ENCODE measurements at regions of chr11 and their contacts with region 1.

Region 1: DNA sequence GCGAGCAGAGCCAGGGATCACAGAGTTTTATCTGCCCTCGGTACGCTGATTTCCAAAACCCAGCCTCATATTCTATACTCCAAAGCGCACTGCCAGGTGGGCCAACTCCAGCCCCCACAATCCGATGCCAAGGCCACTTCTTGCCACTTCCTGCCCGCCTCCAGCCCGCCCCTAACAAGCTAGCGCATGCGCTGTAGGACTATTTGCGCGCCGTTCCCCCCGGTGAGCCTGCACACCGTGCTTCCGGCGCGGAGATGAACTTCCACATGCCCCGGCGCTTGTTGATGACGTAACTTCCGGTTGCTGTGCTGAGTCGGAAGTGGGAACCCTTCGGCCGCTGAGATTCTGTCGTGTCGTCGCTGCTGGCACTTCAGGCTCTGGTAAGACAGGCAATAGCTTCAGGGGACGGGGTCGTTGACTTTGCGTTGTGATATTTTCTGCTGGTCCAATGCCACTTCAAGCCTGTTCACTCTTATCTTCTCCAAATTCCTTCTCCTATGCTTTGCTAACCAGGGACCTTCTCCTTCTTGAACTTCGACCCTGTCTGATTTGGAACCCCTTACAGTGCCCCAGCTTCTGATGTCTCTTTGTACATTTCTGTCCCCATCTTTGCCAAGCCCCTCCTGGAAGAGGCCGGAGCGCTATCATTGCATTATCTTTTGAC is at the start of gene UBE4A:
- DNase-seq: peak; percentile 95 to 96
- ATAC-seq: peak; percentile 93 to 99 (median 97)
- H3K4me3 ChIP-seq: peak within 1 kb of the TSS; percentile 66 to 96 (median 78)
- H3K27ac ChIP-seq: peak within 1 kb of the TSS in 9 of 10 donors; percentile 14 to 82 (median 61)
- H3K4me1 ChIP-seq: peaks cover 7 to 29% (median 24%) of the 10 kb centered on the region in 9 donors
- H3K27me3 ChIP-seq: no peaks in the 10 kb centered on the region
- CTCF ChIP-seq: no peak
- total RNA-seq, gene UBE4A: 38.4 to 46.4 (median 42.3) TPM

Region 2: GRCh38 chr11:118277306-118277705 is 82.1 kb before region 1 on chr11:
- intact Hi-C with region 1: no loop called
- DNase-seq: no peak
- ATAC-seq: peak in 3 of 8 donors; percentile 52 to 64 (median 58)
- H3K4me3 ChIP-seq: no peak overlapping the region
- H3K27ac ChIP-seq: peak overlapping the region in 2 of 10 donors; percentile 22 to 76
- H3K4me1 ChIP-seq: peaks cover 0 to 16% (median 0%) of the 10 kb centered on the region in 9 donors
- H3K27me3 ChIP-seq: peaks cover 0 to 14% (median 0%) of the 10 kb centered on the region in 7 donors
- CTCF ChIP-seq: no peak

Region 3: DNA sequence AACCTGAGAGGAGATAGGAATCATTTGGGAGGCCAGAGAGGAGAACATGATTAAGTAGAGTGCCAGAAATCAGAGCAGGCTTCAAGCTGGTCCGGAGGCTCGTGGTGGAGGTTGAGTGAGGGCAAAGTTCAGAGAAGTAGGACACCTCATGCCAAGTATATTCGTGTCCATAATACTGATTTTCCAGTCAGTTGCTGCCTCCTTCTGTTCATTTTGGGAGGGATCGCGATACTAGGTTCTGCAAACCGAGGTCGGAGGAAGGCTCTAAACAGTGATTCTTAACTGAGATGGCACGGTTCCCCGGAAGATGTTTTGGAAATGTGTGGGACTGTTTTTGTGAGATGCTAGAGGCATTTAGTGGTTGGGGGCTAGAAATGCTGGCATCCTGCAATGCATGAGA is 68.5 kb before region 1 on chr11:
- intact Hi-C with region 1: loop called in 5 of 10 experiments (anchors 5 to 10 kb)
- DNase-seq: peak in 1 of 2 donors; percentile 22
- ATAC-seq: peak; percentile 55 to 83 (median 78)
- H3K4me3 ChIP-seq: peak overlapping the region in 1 of 10 donors; percentile 8
- H3K27ac ChIP-seq: no peak overlapping the region
- H3K4me1 ChIP-seq: no peaks in the 10 kb centered on the region
- H3K27me3 ChIP-seq: peaks cover 0 to 6% (median 0%) of the 10 kb centered on the region in 7 donors
- CTCF ChIP-seq: peak in 8 of 9 donors; percentile 11 to 64 (median 55)